ENCODE measurements at regions of chr5 and their contacts with region 1.

Region 1: GRCh38 chr5:174317259-174317894 is 271.9 kb downstream of the NSG2 start:
- DNase-seq: peak in 2 of 3 donors; percentile 8 to 14
- H3K4me3 ChIP-seq: no peak overlapping the region
- H3K27ac ChIP-seq: no peak overlapping the region
- H3K4me1 ChIP-seq: peaks cover 0 to under 1% (median 0%) of the 10 kb centered on the region in 4 experiments
- H3K27me3 ChIP-seq: peaks cover 2 to 49% (median 5%) of the 10 kb centered on the region in 5 experiments

Region 2: GRCh38 chr5:174045470-174046025 is 271.8 kb before region 1 on chr5 and contains the start of gene NSG2:
- CTCF ChIA-PET with region 1: interaction called, 88 read pairs
- POLR2A ChIA-PET with region 1: interaction called, 3 read pairs
- DNase-seq: peak; percentile 93 to 97 (median 96)
- H3K4me3 ChIP-seq: no peak within 1 kb of the TSS
- H3K27ac ChIP-seq: no peak within 1 kb of the TSS
- H3K4me1 ChIP-seq: no peaks in the 10 kb centered on the region
- H3K27me3 ChIP-seq: peaks cover 0 to 6% (median 0%) of the 10 kb centered on the region in 5 experiments

Region 3: DNA sequence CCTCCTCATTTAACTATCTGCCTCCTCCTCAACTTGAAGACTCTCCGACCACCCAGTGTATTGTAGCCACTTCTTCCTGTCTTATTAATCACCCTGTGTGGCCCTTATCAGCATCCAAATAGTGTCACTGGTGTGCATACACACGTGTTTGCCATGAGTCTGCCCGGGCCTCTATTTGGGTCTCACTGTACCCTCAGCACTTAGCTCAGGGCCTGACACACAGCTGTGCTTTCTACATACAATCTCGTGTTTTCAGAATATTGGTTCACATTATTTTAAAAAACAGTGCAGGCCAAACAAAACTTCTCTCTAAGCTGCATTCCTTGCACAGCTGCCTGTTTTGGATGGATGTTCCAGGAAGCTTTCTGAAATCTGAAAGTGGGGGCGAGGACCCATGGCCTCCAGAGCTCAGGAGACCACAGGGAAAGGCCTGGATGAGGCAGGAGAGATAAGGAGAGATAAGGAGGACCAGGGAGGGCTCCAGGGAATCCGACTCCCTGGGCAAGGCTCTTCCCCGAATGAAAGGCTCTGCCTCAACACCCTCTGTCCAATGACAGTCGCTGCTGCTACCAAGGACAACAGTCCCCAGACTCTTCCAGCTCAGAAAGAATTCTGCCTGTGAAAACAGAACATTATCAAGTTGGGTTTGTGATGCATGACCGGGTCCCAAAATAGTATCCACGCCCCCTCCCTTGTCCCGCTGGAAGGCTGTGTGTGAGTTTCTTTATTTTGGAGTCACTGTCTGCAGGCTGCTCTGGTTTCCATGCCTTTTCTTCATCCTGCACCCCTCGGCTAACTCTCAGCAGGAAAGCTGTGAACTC is 16.2 kb before region 1 on chr5:
- CTCF ChIA-PET with region 1: no interaction called
- POLR2A ChIA-PET with region 1: no interaction called
- DNase-seq: no peak
- H3K4me3 ChIP-seq: no peak overlapping the region
- H3K27ac ChIP-seq: no peak overlapping the region
- H3K4me1 ChIP-seq: no peaks in the 10 kb centered on the region
- H3K27me3 ChIP-seq: peaks cover 0 to 32% (median 2%) of the 10 kb centered on the region in 5 experiments

Region 4: GRCh38 chr5:174327317-174328236 is 10.2 kb after region 1 on chr5:
- CTCF ChIA-PET with region 1: interaction called, 10 read pairs
- POLR2A ChIA-PET with region 1: no interaction called
- DNase-seq: peak; percentile 59 to 78 (median 75)
- H3K4me3 ChIP-seq: no peak overlapping the region
- H3K27ac ChIP-seq: no peak overlapping the region
- H3K4me1 ChIP-seq: no peaks in the 10 kb centered on the region
- H3K27me3 ChIP-seq: peaks cover 0 to 47% (median 8%) of the 10 kb centered on the region in 5 experiments

Measured in common myeloid progenitor, CD34-positive (primary cell).